Stomach (tissue), 19 donors: ENCODE measurements at regions of chr15 and their contacts with region 1.

Region 1: DNA sequence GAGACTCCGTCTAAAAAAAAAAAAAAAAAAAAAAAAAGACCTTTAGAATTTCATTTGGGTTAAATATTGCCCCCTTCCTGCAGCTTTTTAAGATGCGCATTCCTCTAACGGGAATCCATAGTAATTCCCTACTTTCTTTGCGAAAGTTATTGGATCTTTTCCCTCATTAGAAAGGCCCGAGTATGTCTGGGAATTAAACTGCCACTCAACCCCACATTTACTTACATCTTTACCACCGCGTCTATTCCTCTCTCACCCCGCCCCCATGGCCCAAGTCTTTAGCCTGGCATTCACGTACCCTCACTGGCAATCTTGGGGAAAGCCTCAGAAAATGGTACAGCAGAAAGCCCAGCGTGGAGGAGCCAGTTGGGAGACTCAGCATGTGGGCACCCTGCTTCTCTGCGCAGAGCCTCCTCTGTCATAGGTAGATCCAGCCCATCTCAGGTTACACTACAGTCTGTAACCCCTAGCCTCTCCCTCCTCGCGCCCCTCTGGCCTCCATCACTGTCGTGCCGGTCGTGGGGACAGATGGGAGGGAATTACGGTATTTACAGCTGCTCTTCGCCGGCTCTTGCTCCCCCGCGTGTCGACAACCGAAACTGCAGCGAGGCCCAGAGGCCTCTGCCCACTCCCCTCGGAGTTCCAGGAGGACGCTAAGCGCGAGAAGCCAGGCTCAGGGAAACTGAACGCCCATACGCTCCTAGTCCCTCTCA is 6.4 kb upstream of the ANKDD1A start:
- DNase-seq: peak; percentile 73 to 90
- H3K4me3 ChIP-seq: peak overlapping the region; percentile 32 to 35 (median 34)
- H3K27ac ChIP-seq: peak overlapping the region in 2 of 5 donors; percentile 13 to 62
- H3K4me1 ChIP-seq: peaks cover 0 to 14% (median 7%) of the 10 kb centered on the region in 4 donors
- H3K27me3 ChIP-seq: no peaks in the 10 kb centered on the region
- CTCF ChIP-seq: peak in 5 of 7 experiments; percentile 74 to 93 (median 81)
- EP300 ChIP-seq: no peak
- POLR2A ChIP-seq: no peak

Region 2: DNA sequence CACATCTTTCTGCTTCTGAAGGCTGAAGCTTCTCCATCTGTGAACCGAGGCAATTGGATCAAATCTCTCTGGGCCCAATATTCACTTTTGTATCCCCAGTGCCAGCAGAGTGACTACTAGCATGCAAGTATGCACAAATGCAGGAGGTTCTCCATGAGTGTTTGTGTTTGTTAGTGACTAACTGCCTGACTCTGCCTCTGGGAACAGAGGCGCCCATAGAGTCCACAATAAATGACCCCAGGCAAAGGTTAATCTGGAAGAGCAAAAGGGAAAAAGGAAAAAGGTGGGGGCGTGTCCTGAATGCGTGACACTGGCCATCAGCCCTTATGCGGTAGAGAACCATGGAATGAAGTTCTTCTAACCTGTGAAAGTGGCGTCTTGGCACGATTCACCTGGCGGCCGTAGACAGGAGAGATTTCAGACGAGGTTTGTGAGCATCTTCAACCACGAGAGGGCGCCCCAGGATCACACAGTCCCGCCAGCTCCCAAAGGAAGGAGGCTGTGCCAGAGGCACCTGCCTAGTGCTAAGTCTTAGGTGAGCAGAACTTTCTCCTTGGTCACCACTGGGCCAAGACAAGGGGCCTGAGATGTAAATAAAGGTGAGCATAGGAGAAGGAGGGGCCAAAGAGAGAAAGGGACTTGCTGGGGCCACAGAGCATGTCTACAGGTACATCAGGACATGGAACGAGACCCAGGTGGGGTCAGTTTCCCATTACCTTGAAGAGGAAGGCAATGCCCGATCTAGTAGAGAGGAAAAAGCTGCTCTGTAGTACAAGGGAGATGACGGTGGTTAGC is 174.1 kb before region 1 on chr15:
- intact Hi-C with region 1: loop called (anchors 5 kb)
- DNase-seq: peak; percentile 94 to 95
- H3K4me3 ChIP-seq: no peak overlapping the region
- H3K27ac ChIP-seq: peak overlapping the region in 1 of 5 donors; percentile 35
- H3K4me1 ChIP-seq: peaks cover 0 to 12% (median 5%) of the 10 kb centered on the region in 4 donors
- H3K27me3 ChIP-seq: no peaks in the 10 kb centered on the region
- CTCF ChIP-seq: peak in 5 of 7 experiments; percentile 79 to 93 (median 87)
- EP300 ChIP-seq: no peak
- POLR2A ChIP-seq: no peak

Region 3: DNA sequence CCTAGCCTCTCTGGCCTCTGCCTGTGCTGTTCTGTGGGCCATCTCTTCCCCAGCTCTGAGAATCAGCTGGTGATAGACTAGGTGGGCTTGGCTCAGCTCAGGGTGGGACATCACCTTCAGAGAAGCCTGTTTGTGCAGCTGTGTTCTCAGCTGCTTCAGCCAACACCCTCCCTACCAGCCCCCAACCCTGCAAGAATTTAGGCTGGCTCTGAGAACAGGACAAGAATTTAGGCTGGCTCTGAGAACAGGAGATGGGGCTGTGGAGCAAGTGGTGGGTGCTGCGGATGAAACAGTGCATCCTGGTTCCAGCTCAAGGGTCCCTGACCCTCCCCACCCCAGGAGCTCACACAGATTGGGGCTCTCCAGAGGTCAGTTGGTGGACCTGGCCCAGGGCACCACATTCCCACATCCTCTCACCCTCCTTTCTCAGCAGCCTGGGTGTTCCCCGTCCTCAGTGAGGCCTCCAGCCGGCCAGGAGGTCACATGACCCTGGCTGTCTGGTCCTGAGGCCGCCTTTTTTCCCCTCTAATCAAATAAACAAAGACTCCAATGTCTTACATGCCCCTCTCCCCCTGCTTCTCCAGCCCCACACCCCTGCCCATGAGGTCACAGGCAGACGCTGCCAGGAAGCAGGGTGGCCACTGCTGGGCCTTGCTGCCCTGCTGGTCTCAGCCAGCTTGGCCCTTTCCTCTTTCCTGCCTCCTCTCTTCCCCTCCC is 48.7 kb before region 1 on chr15:
- intact Hi-C with region 1: loop called (anchors 10 kb)
- DNase-seq: peak in 1 of 2 donors; percentile 85
- H3K4me3 ChIP-seq: peak overlapping the region in 1 of 4 donors; percentile 8
- H3K27ac ChIP-seq: peak overlapping the region; percentile 15 to 83 (median 77)
- H3K4me1 ChIP-seq: peaks cover 54 to 95% (median 69%) of the 10 kb centered on the region in 4 donors
- H3K27me3 ChIP-seq: no peaks in the 10 kb centered on the region
- CTCF ChIP-seq: no peak
- EP300 ChIP-seq: peak; percentile 15
- POLR2A ChIP-seq: no peak

Region 4: GRCh38 chr15:65069179-65069578 is 163.9 kb after region 1 on chr15:
- intact Hi-C with region 1: no loop called
- DNase-seq: peak in 1 of 2 donors; percentile 91
- H3K4me3 ChIP-seq: no peak overlapping the region
- H3K27ac ChIP-seq: peak overlapping the region; percentile 42 to 88 (median 79)
- H3K4me1 ChIP-seq: peaks cover 41 to 56% (median 45%) of the 10 kb centered on the region in 4 donors
- H3K27me3 ChIP-seq: peaks cover 4 to 46% (median 22%) of the 10 kb centered on the region in 3 donors
- CTCF ChIP-seq: no peak
- EP300 ChIP-seq: no peak
- POLR2A ChIP-seq: no peak

Region 5: GRCh38 chr15:65086017-65086679 is 180.9 kb after region 1 on chr15:
- intact Hi-C with region 1: no loop called
- DNase-seq: peak; percentile 38 to 45
- H3K4me3 ChIP-seq: no peak overlapping the region
- H3K27ac ChIP-seq: peak overlapping the region in 3 of 5 donors; percentile 4 to 87 (median 80)
- H3K4me1 ChIP-seq: peaks cover 11 to 66% (median 29%) of the 10 kb centered on the region in 4 donors
- H3K27me3 ChIP-seq: peaks cover 0 to 30% (median 0%) of the 10 kb centered on the region in 3 donors
- CTCF ChIP-seq: peak in 2 of 7 experiments; percentile 26 to 36
- EP300 ChIP-seq: no peak
- POLR2A ChIP-seq: no peak